ENCODE measurements at regions of chr6 and their contacts with region 1.

Region 1: GRCh38 chr6:127420556-127420955 is 38.6 kb downstream of the KIAA0408 start:
- DNase-seq: peak; percentile 74
- ATAC-seq: peak; percentile 100
- H3K4me3 ChIP-seq: no peak overlapping the region
- H3K27ac ChIP-seq: no peak overlapping the region
- H3K4me1 ChIP-seq: no peaks in the 10 kb centered on the region; the same call in 1 of the 2 replicates
- H3K27me3 ChIP-seq: no peaks in the 10 kb centered on the region
- CTCF ChIP-seq: peak; percentile 55 to 84 (median 69)
- EP300 ChIP-seq: peak in 1 of 2 experiments; percentile 20; a peak in 1 of 4 replicates
- POLR2A ChIP-seq: no peak
- RAD21 ChIP-seq: peak; percentile 88

Region 2: DNA sequence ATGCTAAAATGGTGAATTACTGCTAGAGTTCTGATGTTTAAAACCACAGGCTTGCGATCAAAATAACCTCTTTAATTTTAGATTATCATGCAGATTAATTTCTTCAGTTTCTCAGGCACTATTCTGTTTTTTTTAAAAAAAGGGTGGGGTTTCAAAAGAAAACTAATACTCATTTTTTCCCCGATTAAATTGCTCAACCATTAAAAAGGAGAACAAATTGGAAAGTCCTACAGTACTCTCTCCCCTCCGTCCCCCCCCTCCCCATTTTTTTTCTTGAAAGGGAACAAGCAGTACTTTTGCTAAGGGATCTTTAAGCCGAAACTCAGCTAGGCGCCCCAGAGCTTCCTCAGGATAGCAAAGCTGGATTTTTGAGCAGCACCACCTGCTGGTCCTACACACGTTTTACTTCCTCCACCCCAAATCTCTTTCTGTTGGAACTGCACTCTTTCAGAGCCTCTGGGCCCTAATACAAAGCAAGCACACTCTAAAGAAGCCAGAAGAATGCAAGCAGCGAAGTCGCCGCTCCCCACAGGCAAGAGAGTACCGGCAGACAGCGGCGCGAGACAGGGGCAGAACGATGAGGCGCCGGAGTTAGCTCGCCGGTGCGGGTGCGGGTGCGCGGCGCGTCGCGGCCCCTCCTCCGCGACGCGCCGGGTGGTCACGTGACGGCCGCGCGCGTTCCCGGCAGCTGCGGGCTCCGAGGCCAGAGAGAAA is 154.2 kb before region 1 on chr6 and contains the start of gene RNF146:
- CTCF ChIA-PET with region 1: interaction called, 5 read pairs
- POLR2A ChIA-PET with region 1: interaction called, 11 read pairs
- RAD21 ChIA-PET with region 1: interaction called, 8 read pairs
- SMC1A ChIA-PET with region 1: interaction called, 7 read pairs
- in situ Hi-C with region 1: no loop called
- intact Hi-C with region 1: no loop called
- DNase-seq: peak; percentile 55
- ATAC-seq: peak; percentile 85
- H3K4me3 ChIP-seq: peak within 1 kb of the TSS; percentile 98
- H3K27ac ChIP-seq: peak within 1 kb of the TSS; percentile 87
- H3K4me1 ChIP-seq: no peaks in the 10 kb centered on the region
- H3K27me3 ChIP-seq: no peaks in the 10 kb centered on the region
- CTCF ChIP-seq: peak; percentile 71 to 76 (median 74)
- EP300 ChIP-seq: no peak
- POLR2A ChIP-seq: no peak
- RAD21 ChIP-seq: peak; percentile 46; the same call in 1 of the 2 replicates
- polyA plus RNA-seq, gene RNF146: 9.3 to 12.4 TPM

Region 3: GRCh38 chr6:127302728-127303660 is 117.6 kb before region 1 on chr6:
- CTCF ChIA-PET with region 1: interaction called, 81 read pairs
- POLR2A ChIA-PET with region 1: interaction called, 4 read pairs
- RAD21 ChIA-PET with region 1: interaction called, 41 read pairs
- SMC1A ChIA-PET with region 1: interaction called, 44 read pairs
- in situ Hi-C with region 1: loop called (anchors 5 kb)
- intact Hi-C with region 1: loop called (anchors 1 kb)
- DNase-seq: no peak
- ATAC-seq: peak; percentile 86
- H3K4me3 ChIP-seq: no peak overlapping the region
- H3K27ac ChIP-seq: 0 out of 2 replicates have a peak overlapping the region, but pooled peaks have one; percentile 33
- H3K4me1 ChIP-seq: peaks cover 5% of the 10 kb centered on the region
- H3K27me3 ChIP-seq: no peaks in the 10 kb centered on the region
- CTCF ChIP-seq: peak; percentile 45 to 69 (median 67); a peak in 5 of 6 replicates
- EP300 ChIP-seq: no peak
- POLR2A ChIP-seq: no peak
- RAD21 ChIP-seq: peak; percentile 68

Region 4: DNA sequence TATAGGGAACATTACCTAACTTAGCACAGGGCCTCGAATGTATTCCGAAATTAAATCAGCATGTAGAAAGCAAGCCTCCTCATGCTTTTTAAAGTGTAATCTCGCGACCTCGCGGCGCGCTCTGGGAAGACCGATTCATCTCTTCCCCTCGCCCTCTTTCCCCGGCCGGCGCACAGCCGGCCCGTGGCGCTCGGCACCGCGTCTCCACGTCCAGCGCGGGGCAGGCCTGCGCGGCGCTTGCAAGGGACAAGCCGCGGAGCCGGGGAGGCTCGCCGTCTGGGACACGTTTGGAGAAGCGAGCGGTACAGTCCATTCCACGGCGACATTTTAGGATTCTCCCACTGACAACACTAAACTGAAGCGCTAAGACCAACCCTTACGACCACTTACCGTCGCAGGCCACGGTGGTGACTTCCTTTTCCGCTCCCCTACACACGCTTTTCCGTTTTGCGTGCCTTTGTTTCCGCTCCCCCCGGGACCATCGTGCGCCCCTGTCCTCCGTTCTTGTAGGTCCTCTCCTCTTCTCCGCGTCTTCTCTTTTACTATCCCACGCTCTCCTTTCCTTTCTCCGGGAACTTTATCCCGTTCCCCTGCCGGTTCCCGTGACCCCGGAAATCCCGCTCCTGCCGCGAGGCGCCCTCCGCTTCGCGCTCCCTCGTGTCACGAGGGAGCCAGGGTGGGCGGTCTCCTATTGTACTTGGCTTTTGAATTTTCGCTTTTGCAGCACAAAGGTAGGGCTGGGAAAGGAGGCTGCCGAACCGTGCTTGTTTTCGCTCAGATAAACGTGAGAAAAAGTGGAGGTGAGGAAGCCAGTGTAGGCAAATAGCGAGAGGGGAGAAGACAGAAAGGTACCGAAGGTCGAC is 77.4 kb before region 1 on chr6 and contains the start of gene ECHDC1:
- CTCF ChIA-PET with region 1: interaction called, 5 read pairs
- POLR2A ChIA-PET with region 1: interaction called, 5 read pairs
- RAD21 ChIA-PET with region 1: interaction called, 10 read pairs
- SMC1A ChIA-PET with region 1: interaction called, 20 read pairs
- in situ Hi-C with region 1: no loop called
- intact Hi-C with region 1: loop called (anchors 2 kb)
- DNase-seq: no peak
- ATAC-seq: peak; percentile 82
- H3K4me3 ChIP-seq: peak within 1 kb of the TSS; percentile 93
- H3K27ac ChIP-seq: peak within 1 kb of the TSS; percentile 98
- H3K4me1 ChIP-seq: peaks cover 10% of the 10 kb centered on the region
- H3K27me3 ChIP-seq: no peaks in the 10 kb centered on the region
- CTCF ChIP-seq: 0 out of 6 replicates have a peak, but pooled peaks of 1 of the 3 experiments have one; percentile 1
- EP300 ChIP-seq: no peak
- POLR2A ChIP-seq: peak; percentile 87
- RAD21 ChIP-seq: no peak
- polyA plus RNA-seq, gene ECHDC1: 71.6 to 85.4 TPM

Region 5: DNA sequence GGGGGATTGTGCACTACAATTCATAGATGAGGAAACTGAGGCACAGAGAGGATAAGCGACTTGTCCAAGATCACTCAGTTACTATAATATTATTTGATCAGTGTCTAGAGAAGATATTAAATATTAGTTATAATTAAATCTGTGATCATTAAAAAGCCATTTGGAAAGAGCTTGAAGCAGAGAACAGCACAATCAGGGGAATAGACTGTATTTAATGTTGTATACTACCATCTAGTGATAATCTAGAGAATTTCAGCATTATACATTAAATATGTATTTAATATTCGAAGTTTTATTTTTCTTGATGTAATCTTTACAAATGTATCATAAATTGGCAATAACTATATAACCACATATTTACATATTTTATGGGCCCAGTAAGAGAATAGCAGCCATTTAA is 118.7 kb after region 1 on chr6:
- CTCF ChIA-PET with region 1: interaction called, 11 read pairs
- POLR2A ChIA-PET with region 1: no interaction called
- RAD21 ChIA-PET with region 1: interaction called, 9 read pairs
- SMC1A ChIA-PET with region 1: no interaction called
- in situ Hi-C with region 1: no loop called
- intact Hi-C with region 1: no loop called
- DNase-seq: no peak
- ATAC-seq: peak; percentile 69
- H3K4me3 ChIP-seq: no peak overlapping the region
- H3K27ac ChIP-seq: no peak overlapping the region
- H3K4me1 ChIP-seq: no peaks in the 10 kb centered on the region
- H3K27me3 ChIP-seq: no peaks in the 10 kb centered on the region
- CTCF ChIP-seq: peak in 2 of 3 experiments; percentile 19 to 49; a peak in 2 of 6 replicates
- EP300 ChIP-seq: no peak
- POLR2A ChIP-seq: no peak
- RAD21 ChIP-seq: peak; percentile 53

Measured in GM12878 (cell line).